Heart right ventricle (tissue), 16 donors: ENCODE measurements at regions of chr16 and their contacts with region 1.

Region 1: GRCh38 chr16:55126456-55126855 is 195.8 kb downstream of the IRX5 start:
- DNase-seq: no peak
- ATAC-seq: no peak
- H3K4me3 ChIP-seq: no peak overlapping the region
- H3K27ac ChIP-seq: no peak overlapping the region
- H3K4me1 ChIP-seq: no peaks in the 10 kb centered on the region
- H3K27me3 ChIP-seq: no peaks in the 10 kb centered on the region
- CTCF ChIP-seq: no peak

Region 2: DNA sequence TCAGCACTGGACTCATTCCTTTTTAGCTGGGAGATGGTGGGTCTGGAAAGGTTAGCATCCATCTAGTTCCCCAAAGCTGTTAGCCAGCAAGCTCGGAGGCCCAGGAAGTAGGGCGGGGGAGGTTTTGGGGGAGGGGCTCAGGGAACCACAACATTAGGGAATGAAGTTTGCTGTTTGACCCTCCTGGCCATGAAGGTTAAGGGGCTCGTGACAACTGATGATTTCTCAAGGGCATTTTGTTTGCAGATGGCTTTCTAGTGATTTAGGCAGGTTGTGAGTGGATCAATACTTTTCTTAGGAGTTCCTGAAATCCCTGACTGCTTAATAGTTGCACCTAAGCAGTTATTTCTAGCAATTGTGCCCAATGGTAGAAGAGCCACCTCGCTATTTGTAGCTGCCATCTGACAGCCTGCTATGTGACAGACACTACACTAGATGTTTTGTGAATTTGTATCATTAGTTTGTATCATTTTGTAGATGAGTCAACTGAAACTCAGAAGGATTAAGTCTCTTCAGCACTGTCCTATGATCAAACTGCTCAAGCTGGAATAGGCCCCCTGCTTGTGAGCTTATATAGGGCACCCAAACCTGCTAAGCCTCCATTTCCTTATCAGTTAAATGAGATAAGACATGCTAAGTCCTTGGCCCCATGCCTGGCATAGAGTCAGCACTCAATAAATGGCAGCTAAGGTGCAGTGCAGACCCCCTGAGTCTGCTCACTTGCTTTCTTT is 986.2 kb before region 1 on chr16:
- intact Hi-C with region 1: loop called in 1 of 10 experiments (anchors 5 kb)
- DNase-seq: no peak
- ATAC-seq: no peak
- H3K4me3 ChIP-seq: no peak overlapping the region
- H3K27ac ChIP-seq: no peak overlapping the region
- H3K4me1 ChIP-seq: peaks cover 0 to 4% (median 0%) of the 10 kb centered on the region in 9 donors
- H3K27me3 ChIP-seq: no peaks in the 10 kb centered on the region
- CTCF ChIP-seq: peak in 1 of 9 donors; percentile 5